ENCODE measurements at regions of chr3 and their contacts with region 1.

Region 1: DNA sequence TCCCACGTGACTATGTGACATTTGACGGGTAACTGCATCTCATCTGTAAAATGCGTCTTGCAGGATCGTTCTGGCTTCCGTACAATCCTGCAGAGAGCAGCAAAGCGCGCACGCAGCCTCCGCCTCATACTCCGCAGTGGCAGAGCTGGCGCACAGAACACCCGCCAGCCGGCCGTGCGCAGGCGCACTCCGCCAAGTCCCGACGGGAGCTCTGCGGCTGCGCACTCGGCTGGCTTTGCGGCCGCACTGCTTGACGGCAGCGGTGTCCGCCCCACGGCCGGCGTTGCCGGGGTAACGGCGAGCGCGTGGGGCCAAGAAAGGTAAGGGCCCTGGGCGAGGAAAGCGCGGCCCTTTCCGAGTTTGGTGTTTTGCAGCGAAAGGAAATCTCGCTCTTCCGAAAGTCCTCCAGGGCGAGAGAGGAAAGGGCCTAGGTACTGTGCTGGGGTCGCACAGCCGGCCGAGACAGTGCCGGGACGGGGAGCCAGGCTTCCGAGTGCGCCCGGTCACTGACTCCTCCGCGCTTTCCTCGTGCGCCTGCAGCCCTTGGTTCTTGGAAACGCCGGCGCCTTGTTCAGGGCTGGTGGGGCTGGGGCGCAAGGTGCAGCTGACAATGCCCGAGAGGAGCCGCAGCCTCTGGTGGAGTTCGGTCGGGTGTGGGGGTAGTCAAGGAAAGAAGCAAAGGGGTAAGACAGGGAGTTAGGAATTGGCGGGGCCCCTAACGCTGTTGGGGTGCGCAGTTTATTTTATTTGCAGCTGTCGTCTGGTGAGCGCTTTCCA is at the start of gene TSEN2:
- DNase-seq: peak; percentile 80 to 94 (median 88)
- H3K4me3 ChIP-seq: peak within 1 kb of the TSS; percentile 54 to 98 (median 86)
- H3K27ac ChIP-seq: peak within 1 kb of the TSS; percentile 59 to 95 (median 85)
- H3K27me3 ChIP-seq: no peaks in the 10 kb centered on the region
- CTCF ChIP-seq: peak in 50 of 56 donors; percentile 11 to 72 (median 44)
- total RNA-seq, gene TSEN2: 21.3 to 45.6 (median 32.3) TPM

Region 2: GRCh38 chr3:12135029-12135657 is 349.2 kb before region 1 on chr3:
- intact Hi-C with region 1: loop called (anchors 2 to 5 kb)
- DNase-seq: peak; percentile 62 to 83 (median 74)
- H3K4me3 ChIP-seq: no peak overlapping the region
- H3K27ac ChIP-seq: peak overlapping the region in 4 of 59 donors; percentile 1 to 58 (median 26)
- H3K27me3 ChIP-seq: peaks cover 0 to 8% (median 0%) of the 10 kb centered on the region in 45 donors
- CTCF ChIP-seq: peak; percentile 17 to 90 (median 78)

Region 3: DNA sequence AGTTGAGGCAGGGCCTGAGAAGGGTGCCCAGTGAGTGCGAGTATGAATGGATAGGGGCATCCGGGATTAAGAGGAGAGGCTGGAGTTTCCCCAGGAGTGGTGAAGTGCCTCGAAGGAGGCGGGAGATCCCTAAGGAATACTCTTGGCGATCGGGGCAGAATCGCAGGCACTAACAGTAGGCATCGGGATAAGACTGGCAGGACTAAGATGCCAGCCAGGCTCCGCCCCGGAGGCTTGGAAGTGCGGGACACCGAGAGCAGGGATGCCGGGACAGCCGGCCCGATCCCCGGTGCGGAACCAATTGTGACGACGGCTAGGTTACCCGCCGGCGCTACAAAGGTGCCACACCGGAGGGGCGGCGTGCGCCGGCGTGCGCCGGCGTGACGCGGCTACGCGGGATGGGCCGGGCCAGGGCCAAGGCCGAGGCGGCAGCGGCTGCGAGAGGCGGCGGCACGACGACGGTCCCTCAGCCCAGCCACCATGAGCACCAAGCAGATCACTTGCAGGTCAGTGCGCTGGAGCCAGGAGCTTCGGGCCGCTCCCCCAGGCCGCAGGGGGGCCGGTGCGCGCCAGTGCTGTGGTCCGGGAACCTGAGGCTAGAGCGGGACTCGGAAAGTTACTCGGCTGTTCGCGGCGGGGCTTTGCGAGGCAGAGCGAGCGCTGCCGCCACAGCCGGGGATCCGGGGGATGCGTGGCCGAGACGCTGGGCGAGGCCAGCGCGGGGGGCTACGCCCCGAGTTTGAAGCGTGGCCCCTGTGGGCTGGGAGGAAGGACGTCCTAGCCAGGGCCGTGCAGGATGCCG is 72.5 kb after region 1 on chr3 and contains the start of gene MKRN2:
- intact Hi-C with region 1: loop called (anchors 2 kb)
- DNase-seq: peak; percentile 72 to 92 (median 83)
- H3K4me3 ChIP-seq: peak within 1 kb of the TSS; percentile 74 to 100 (median 92)
- H3K27ac ChIP-seq: peak within 1 kb of the TSS; percentile 32 to 96 (median 89)
- H3K27me3 ChIP-seq: peaks cover 0 to 25% (median 0%) of the 10 kb centered on the region in 45 donors
- CTCF ChIP-seq: peak in 29 of 56 donors; percentile 4 to 58 (median 21)
- total RNA-seq, gene MKRN2: 24.4 to 47.5 (median 34.3) TPM